ENCODE measurements at regions of chr6 and their contacts with region 1.

Region 1: DNA sequence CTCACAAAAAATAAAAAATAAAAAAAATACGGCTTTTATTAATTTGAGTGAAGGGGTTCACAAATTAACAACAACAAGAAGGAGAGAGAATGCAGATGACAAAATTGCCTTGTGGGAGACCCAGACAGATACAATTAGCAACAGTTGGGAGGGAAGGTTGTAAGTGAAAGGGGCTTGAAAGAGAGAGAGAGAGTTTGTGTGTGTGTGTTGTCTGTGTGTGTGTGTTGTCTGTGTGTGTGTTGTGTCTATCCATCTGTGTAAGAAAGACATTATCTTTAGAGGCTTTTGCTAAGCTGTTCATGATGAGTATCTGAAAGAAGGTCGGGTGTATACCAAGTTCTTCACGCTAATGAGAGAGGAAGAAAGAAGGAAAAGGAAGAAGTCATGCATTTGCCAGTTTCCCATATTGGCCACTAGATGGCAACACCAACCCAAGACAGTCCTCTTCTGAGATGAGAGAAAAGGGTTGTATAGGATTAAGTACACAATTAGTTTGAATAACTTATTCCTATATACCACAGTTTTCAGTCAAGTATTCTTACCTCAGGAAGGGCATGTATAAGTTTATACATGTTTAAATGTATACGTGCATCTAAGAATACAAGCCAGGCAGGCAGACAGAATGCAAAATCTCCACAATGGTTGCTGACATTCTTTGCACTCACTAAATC is 63.7 kb upstream of the CD2AP start:
- DNase-seq: peak; percentile 64
- ATAC-seq: peak; percentile 90
- H3K4me3 ChIP-seq: peak overlapping the region; percentile 52 to 62 (median 57); a peak in 5 of 6 replicates
- H3K27ac ChIP-seq: no peak overlapping the region
- H3K4me1 ChIP-seq: peaks cover 20% of the 10 kb centered on the region
- H3K27me3 ChIP-seq: no peaks in the 10 kb centered on the region
- CTCF ChIP-seq: peak; percentile 93
- EP300 ChIP-seq: no peak
- POLR2A ChIP-seq: no peak
- RAD21 ChIP-seq: peak; percentile 86

Region 2: GRCh38 chr6:47252633-47253032 is 161.3 kb before region 1 on chr6:
- CTCF ChIA-PET with region 1: no interaction called
- POLR2A ChIA-PET with region 1: no interaction called
- in situ Hi-C with region 1: no loop called
- intact Hi-C with region 1: no loop called
- DNase-seq: no peak
- ATAC-seq: no peak
- H3K4me3 ChIP-seq: no peak overlapping the region
- H3K27ac ChIP-seq: no peak overlapping the region
- H3K4me1 ChIP-seq: peaks cover 25% of the 10 kb centered on the region
- H3K27me3 ChIP-seq: no peaks in the 10 kb centered on the region
- CTCF ChIP-seq: no peak
- EP300 ChIP-seq: no peak
- POLR2A ChIP-seq: no peak
- RAD21 ChIP-seq: no peak

Region 3: GRCh38 chr6:47455534-47456209 is 41.8 kb after region 1 on chr6:
- CTCF ChIA-PET with region 1: no interaction called
- POLR2A ChIA-PET with region 1: no interaction called
- in situ Hi-C with region 1: no loop called
- intact Hi-C with region 1: loop called (anchors 5 kb)
- DNase-seq: no peak
- ATAC-seq: no peak
- H3K4me3 ChIP-seq: no peak overlapping the region
- H3K27ac ChIP-seq: no peak overlapping the region
- H3K4me1 ChIP-seq: peaks cover 13% of the 10 kb centered on the region
- H3K27me3 ChIP-seq: 0 out of 5 replicates have a peak, but pooled peaks cover 0 to 4% of the 10 kb centered on the region in 2 experiments
- CTCF ChIP-seq: no peak
- EP300 ChIP-seq: no peak
- POLR2A ChIP-seq: no peak
- RAD21 ChIP-seq: no peak

Region 4: DNA sequence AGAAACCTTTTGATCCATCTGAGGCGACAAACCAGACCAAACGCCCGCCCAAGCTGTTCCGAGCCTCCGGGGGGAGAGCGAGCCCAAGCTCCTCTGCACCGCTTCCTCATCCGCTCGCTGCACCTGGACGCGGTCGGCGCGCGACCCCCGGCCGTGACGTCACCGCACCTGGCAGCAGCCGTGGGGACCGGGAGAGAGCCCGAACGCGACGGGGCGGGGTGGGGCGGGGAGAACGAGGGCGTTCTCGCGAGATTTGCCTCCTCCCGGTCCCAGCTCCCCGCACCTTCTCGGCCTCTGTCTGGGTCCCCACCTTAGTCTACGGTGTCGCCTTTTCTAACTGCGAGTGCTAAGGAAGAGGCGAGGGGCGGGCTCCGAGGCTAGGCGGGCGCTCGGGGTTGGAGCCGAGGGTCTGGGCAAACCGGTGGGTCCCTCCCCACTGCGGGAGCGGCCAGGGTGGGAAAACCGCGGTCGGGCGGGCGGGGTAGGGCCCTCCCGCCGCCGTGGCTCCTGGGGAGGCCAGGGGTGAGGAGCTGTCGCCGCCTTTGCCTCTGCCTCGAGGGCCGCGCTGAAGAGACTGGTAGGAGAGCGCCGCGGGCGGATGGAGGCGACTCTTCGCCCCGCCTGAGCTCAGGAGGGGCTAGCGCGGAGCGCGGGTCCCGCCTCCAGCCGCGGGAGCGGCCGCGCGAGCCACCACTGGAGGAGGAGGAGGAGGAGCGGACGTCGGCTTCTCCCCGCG is 63.8 kb after region 1 on chr6 and contains the start of gene CD2AP:
- CTCF ChIA-PET with region 1: no interaction called
- POLR2A ChIA-PET with region 1: interaction called, 8 read pairs
- in situ Hi-C with region 1: no loop called
- intact Hi-C with region 1: loop called (anchors 1 kb)
- DNase-seq: peak; percentile 84
- ATAC-seq: peak; percentile 94
- H3K4me3 ChIP-seq: peak within 1 kb of the TSS; percentile 91 to 94 (median 93)
- H3K27ac ChIP-seq: peak within 1 kb of the TSS; percentile 93
- H3K4me1 ChIP-seq: peaks cover 40% of the 10 kb centered on the region
- H3K27me3 ChIP-seq: no peaks in the 10 kb centered on the region; a peak in 1 of 5 replicates
- CTCF ChIP-seq: peak; percentile 48
- EP300 ChIP-seq: no peak; a peak in 1 of 4 replicates
- POLR2A ChIP-seq: peak; percentile 81 to 85
- RAD21 ChIP-seq: peak; percentile 43; the same call in 1 of the 2 replicates
- total RNA-seq, gene CD2AP: 31.9 and 40.1 TPM in 2 replicates

Region 5: DNA sequence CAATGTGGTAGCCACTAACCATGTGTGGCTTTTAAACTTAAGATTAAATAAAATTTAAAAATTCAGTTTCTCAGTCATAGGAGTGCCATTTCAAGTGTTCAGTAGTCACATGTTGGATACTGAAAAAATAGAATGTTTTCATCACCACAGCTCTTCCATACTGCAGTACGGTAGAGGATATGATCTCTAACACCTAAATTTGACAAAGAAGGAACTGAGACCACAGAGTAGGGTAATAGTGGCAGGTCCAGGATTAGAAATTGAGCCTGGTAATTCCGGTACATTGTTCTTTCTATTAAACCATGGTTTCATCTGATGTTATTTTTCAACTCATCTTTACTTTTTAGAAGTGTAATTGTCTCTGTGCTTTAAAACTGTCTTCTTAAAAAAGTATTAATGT is 167.7 kb after region 1 on chr6:
- CTCF ChIA-PET with region 1: no interaction called
- POLR2A ChIA-PET with region 1: no interaction called
- in situ Hi-C with region 1: no loop called
- intact Hi-C with region 1: loop called (anchors 5 kb)
- DNase-seq: no peak
- ATAC-seq: no peak
- H3K4me3 ChIP-seq: no peak overlapping the region
- H3K27ac ChIP-seq: no peak overlapping the region
- H3K4me1 ChIP-seq: no peaks in the 10 kb centered on the region
- H3K27me3 ChIP-seq: no peaks in the 10 kb centered on the region
- CTCF ChIP-seq: no peak
- EP300 ChIP-seq: no peak
- POLR2A ChIP-seq: no peak
- RAD21 ChIP-seq: no peak

Region 6: GRCh38 chr6:47631269-47631772 is 217.4 kb after region 1 on chr6:
- CTCF ChIA-PET with region 1: no interaction called
- POLR2A ChIA-PET with region 1: no interaction called
- in situ Hi-C with region 1: no loop called
- intact Hi-C with region 1: loop called (anchors 2 kb)
- DNase-seq: peak; percentile 66
- ATAC-seq: peak; percentile 59
- H3K4me3 ChIP-seq: peak overlapping the region in 2 of 3 experiments; percentile 5 to 42; a peak in 3 of 6 replicates
- H3K27ac ChIP-seq: no peak overlapping the region
- H3K4me1 ChIP-seq: peaks cover 31% of the 10 kb centered on the region
- H3K27me3 ChIP-seq: 0 out of 5 replicates have a peak, but pooled peaks cover 0 to 4% of the 10 kb centered on the region in 2 experiments
- CTCF ChIP-seq: peak; percentile 73
- EP300 ChIP-seq: no peak
- POLR2A ChIP-seq: no peak
- RAD21 ChIP-seq: peak; percentile 68; the same call in 1 of the 2 replicates

Region 7: GRCh38 chr6:47780510-47781356 is 366.8 kb after region 1 on chr6:
- CTCF ChIA-PET with region 1: interaction called, 17 read pairs
- POLR2A ChIA-PET with region 1: no interaction called
- in situ Hi-C with region 1: loop called (anchors 10 kb)
- intact Hi-C with region 1: loop called (anchors 1 kb)
- DNase-seq: peak; percentile 62
- ATAC-seq: peak; percentile 98
- H3K4me3 ChIP-seq: no peak overlapping the region
- H3K27ac ChIP-seq: no peak overlapping the region
- H3K4me1 ChIP-seq: no peaks in the 10 kb centered on the region
- H3K27me3 ChIP-seq: peaks cover 0 to 6% of the 10 kb centered on the region in 2 experiments; a peak in 1 of 5 replicates
- CTCF ChIP-seq: peak; percentile 82
- EP300 ChIP-seq: no peak
- POLR2A ChIP-seq: no peak
- RAD21 ChIP-seq: peak; percentile 50

Region 8: DNA sequence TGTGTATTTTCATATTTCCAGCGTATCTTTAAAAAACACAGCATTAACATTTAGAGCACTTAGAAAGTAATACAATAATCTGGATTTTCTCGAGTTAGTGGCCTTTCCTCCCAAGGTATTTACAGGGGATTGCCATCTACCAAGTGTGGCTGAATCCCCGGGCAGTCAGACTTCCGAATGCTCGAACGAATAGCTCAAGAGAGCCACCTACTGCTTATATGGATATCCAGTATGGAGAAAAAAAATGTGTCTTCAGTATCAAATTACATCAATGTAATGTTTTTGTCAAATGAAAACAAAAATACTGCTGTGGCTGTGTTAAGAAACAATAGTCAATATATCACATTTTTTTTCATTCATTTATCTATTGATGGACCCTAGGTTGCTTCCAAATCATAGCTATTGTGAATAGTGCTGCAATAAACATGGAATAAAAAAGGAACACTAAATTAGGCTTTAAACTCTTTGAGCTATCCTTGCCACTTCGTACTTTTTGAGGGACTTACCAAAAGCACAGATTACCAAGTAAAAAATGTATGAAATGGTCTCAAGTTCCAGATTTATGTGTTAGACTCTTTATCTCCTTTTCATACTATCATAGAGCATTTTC is 1351.6 kb after region 1 on chr6:
- CTCF ChIA-PET with region 1: no interaction called
- POLR2A ChIA-PET with region 1: no interaction called
- in situ Hi-C with region 1: no loop called
- intact Hi-C with region 1: loop called (anchors 10 kb)
- DNase-seq: peak; percentile 46
- ATAC-seq: peak; percentile 93
- H3K4me3 ChIP-seq: no peak overlapping the region
- H3K27ac ChIP-seq: no peak overlapping the region
- H3K4me1 ChIP-seq: no peaks in the 10 kb centered on the region
- H3K27me3 ChIP-seq: no peaks in the 10 kb centered on the region
- CTCF ChIP-seq: peak; percentile 73
- EP300 ChIP-seq: no peak
- POLR2A ChIP-seq: no peak
- RAD21 ChIP-seq: peak; percentile 62

Measured in HepG2 (cell line).